ENCODE measurements at regions of chr2 and their contacts with region 1.

Region 1: DNA sequence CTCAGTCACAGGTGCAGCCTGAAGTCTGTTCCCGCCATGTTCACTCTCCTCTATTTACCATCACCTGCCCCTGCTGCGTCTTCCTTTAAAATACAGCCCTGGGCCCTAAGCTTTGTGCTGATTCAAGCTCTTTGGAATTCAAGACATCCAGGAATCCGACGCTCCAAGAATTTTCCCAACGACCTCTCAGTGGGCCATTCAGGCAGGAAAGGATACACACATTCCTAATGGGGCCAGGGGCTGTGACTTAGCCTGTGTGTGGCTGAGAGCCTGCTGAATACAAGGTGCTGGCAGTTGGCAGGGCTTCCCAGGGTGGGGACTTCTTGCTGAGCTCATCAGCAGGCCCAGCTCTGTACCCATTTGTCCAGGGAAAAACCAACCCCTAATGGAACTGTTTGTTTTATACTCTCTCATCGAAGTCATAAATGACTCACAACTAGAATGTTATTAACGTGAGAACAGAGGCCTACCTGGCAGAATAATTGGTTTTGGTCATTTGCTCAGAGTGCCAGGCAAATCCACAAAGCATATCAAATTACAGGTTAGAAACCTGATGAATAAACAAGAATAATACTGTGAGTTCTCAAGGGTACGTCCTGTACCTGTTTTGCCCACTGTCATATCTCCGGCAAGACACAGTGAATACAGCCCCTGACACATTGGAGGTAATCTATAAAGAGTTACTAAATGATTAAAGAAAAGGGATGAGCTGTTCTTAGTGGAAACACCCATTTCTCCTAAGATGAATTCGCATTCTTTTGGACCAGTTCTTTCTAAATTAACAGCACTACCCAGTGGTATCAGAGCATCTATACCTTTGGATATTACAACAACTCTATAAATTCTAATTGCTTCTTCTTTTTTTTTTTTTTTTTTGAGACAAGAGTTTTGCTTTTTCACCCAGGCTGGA is 12.6 kb upstream of the KCMF1 start:
- DNase-seq: peak; percentile 97
- H3K4me3 Mint-ChIP-seq: peak overlapping the region; percentile 54
- H3K27ac Mint-ChIP-seq: peak overlapping the region; percentile 98
- H3K4me1 Mint-ChIP-seq: peaks cover 37% of the 10 kb centered on the region
- H3K27me3 Mint-ChIP-seq: no peaks in the 10 kb centered on the region
- CTCF ChIP-seq: no peak

Region 2: GRCh38 chr2:84931384-84931821 is 27.0 kb before region 1 on chr2:
- CTCF ChIA-PET with region 1: interaction called, 23 read pairs
- POLR2A ChIA-PET with region 1: interaction called, 42 read pairs
- intact Hi-C with region 1: no loop called
- DNase-seq: no peak
- H3K4me3 Mint-ChIP-seq: no peak overlapping the region
- H3K27ac Mint-ChIP-seq: peak overlapping the region; percentile 24
- H3K4me1 Mint-ChIP-seq: peaks cover 11% of the 10 kb centered on the region
- H3K27me3 Mint-ChIP-seq: no peaks in the 10 kb centered on the region
- CTCF ChIP-seq: no peak

Region 3: GRCh38 chr2:84939426-84940087 is 18.8 kb before region 1 on chr2:
- CTCF ChIA-PET with region 1: interaction called, 3 read pairs
- POLR2A ChIA-PET with region 1: interaction called, 96 read pairs
- intact Hi-C with region 1: no loop called
- DNase-seq: no peak
- H3K4me3 Mint-ChIP-seq: no peak overlapping the region
- H3K27ac Mint-ChIP-seq: peak overlapping the region; percentile 54
- H3K4me1 Mint-ChIP-seq: peaks cover 11% of the 10 kb centered on the region
- H3K27me3 Mint-ChIP-seq: no peaks in the 10 kb centered on the region
- CTCF ChIP-seq: no peak

Region 4: DNA sequence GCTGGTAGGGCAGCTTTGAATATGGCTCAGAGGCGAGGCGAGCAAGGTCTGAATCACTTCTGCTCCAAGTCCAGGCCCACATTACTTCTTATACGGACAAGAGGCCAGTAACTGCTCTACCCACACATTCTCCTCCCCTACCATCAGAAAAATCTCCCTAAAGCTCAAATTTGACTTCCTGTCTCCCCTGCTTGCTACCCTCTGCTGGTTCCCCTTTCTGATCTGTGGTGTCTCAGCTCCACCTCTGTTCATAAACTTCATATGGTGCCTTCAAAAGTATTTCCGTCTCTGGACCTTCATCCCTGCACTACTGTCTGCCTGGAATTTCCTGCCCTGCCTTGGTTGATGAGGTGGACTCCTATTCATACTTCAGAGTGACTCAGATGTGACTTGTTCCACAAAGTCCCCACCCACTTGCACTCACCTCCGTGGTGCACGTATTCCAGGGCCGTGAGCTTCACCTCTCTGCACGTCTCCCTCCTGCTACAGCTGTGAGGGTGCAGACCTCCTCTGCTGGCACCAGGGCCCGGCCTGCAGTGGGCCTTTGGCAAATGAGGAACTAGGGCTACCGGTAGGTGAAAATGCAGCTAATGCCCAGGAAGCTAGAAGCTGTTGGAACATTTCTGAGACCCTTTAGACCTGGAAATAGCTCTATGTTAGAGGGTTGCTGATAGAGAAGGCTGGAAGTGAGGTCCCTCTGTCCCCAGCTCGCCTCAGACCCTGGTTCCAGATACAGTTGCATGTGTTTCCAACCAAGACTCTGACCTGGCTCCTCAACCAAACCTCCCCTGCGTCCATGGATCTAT is 12.0 kb before region 1 on chr2:
- CTCF ChIA-PET with region 1: interaction called, 22 read pairs
- POLR2A ChIA-PET with region 1: interaction called, 96 read pairs
- intact Hi-C with region 1: no loop called
- DNase-seq: peak; percentile 85
- H3K4me3 Mint-ChIP-seq: peak overlapping the region; percentile 8
- H3K27ac Mint-ChIP-seq: peak overlapping the region; percentile 89
- H3K4me1 Mint-ChIP-seq: peaks cover 13% of the 10 kb centered on the region
- H3K27me3 Mint-ChIP-seq: no peaks in the 10 kb centered on the region
- CTCF ChIP-seq: no peak

Region 5: DNA sequence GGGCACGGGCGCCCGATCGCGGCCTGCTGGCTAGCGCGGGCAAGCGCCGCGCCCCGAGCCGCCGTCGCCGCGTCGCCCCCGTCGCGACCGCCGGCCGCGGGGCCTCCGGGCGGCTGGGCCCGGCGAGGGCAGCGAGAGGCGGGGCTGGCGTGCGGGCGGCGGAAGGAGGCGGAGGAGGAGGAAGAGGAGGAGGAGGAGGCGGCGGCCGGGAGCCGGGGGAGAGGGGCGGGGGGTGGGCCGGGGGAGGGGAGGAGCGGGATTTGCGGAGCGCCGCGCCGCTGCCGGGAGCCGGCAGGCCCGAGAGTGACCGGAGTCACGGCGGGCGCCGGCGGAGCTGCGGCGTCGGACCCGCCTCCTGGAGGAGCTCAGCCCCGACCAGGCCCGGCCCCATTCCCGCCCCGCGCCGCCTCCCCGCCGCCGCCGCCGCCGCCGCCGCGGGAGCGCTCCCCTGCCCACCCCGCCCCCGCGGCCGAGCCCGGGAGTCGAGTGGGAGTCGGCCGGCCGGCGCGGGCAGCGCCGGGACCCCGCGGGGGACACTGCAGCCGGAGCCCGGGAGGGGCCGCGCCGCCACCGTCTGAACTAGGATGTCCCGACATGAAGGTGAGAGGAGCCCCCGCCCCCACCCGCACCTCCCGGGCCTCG is 12.6 kb after region 1 on chr2 and contains the start of gene KCMF1:
- CTCF ChIA-PET with region 1: interaction called, 6 read pairs
- POLR2A ChIA-PET with region 1: interaction called, 198 read pairs
- intact Hi-C with region 1: no loop called
- DNase-seq: peak; percentile 69
- H3K4me3 Mint-ChIP-seq: peak within 1 kb of the TSS; percentile 97
- H3K27ac Mint-ChIP-seq: peak within 1 kb of the TSS; percentile 97
- H3K4me1 Mint-ChIP-seq: peaks cover 12% of the 10 kb centered on the region
- H3K27me3 Mint-ChIP-seq: no peaks in the 10 kb centered on the region
- CTCF ChIP-seq: no peak
- total RNA-seq, gene KCMF1: 169 and 170 TPM in 2 replicates

Measured in MCF 10A (cell line).